ENCODE measurements at regions of chr3 and their contacts with region 1.

Region 1: GRCh38 chr3:115627180-115628074 is 4.1 kb downstream of the GAP43 start:
- DNase-seq: no peak
- ATAC-seq: no peak
- H3K4me3 Mint-ChIP-seq: no peak overlapping the region
- H3K27ac Mint-ChIP-seq: no peak overlapping the region
- H3K4me1 Mint-ChIP-seq: peaks cover 11% of the 10 kb centered on the region
- H3K27me3 Mint-ChIP-seq: peaks cover 24% of the 10 kb centered on the region
- CTCF ChIP-seq: no peak

Region 2: DNA sequence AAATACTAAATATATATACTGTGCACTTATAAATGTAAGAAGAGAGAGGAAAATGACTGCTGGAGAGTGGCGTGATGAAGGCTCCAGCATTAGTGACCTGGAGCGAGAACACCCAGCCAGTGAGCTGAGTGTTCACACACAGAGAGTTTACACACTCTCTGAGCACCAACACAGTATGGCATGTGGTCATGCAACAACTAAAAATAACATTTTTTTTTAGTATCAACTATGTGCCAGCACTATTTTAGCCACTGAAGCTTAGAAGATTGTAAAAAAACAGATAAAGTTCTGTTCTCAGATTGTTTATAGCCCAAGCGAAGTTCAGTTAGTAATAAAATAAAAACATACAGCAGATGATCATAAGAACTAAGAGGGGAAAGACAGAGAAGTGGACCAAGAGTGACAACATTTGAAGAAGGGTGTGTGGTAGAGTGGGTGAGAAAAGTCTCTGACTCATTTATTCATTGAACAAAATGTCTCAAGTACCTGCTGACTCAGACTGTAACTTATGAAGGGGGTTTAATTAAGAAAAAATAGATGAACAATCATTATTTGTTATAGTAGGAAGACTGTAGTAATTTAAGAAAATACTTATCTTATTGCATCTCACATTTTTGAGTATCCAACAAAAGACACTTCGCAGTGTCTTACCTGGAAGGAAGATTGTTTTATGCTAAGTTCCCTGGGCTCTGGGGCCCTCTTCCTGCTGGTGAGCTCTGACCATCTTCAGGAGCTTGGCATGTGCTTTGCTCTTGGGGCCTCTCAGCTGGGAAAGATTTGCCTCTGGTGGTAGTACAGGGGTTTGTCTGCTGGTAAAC is 39.7 kb after region 1 on chr3:
- CTCF ChIA-PET with region 1: no interaction called
- POLR2A ChIA-PET with region 1: interaction called, 11 read pairs
- intact Hi-C with region 1: no loop called
- DNase-seq: no peak
- ATAC-seq: no peak
- H3K4me3 Mint-ChIP-seq: no peak overlapping the region
- H3K27ac Mint-ChIP-seq: no peak overlapping the region
- H3K4me1 Mint-ChIP-seq: peaks cover 4% of the 10 kb centered on the region
- H3K27me3 Mint-ChIP-seq: no peaks in the 10 kb centered on the region
- CTCF ChIP-seq: no peak

Measured in activated B cell treated with CpG ODN at 0.5 μM for 24 hours (primary cell).